ENCODE measurements at regions of chr12 and their contacts with region 1.

Region 1: GRCh38 chr12:55738123-55739024 is 4.5 kb upstream of the GDF11 start:
- DNase-seq: peak; percentile 77
- ATAC-seq: peak; percentile 93
- H3K4me3 ChIP-seq: peak overlapping the region; percentile 78
- H3K27ac ChIP-seq: peak overlapping the region; percentile 45
- H3K4me1 ChIP-seq: peaks cover 7% of the 10 kb centered on the region
- H3K27me3 ChIP-seq: no peaks in the 10 kb centered on the region
- CTCF ChIP-seq: peak; percentile 68 to 89 (median 87); a peak in 5 of 6 replicates
- EP300 ChIP-seq: no peak
- POLR2A ChIP-seq: no peak
- RAD21 ChIP-seq: peak; percentile 96

Region 2: DNA sequence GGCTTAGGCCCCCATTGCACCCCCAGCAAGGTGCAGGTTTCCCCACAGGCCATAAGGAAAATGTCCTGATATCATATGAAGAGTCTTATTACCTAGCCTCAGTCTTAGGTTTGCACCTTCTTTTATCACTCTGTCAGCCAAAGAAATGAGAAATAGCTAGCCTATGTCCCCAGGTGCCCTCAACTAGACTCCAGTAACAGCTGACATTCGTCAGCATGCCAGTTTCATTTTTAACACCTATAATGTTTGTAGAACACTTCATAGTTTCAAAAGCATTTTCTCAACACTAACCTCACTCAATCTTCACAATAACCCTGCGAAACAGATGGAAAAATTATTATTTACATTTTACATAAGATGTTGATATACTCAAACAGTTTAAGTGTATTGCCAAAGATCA is 125.7 kb before region 1 on chr12:
- CTCF ChIA-PET with region 1: no interaction called
- POLR2A ChIA-PET with region 1: no interaction called
- RAD21 ChIA-PET with region 1: no interaction called
- SMC1A ChIA-PET with region 1: no interaction called
- in situ Hi-C with region 1: no loop called
- intact Hi-C with region 1: no loop called
- DNase-seq: no peak
- ATAC-seq: peak; percentile 18; the same call in 1 of the 3 replicates
- H3K4me3 ChIP-seq: no peak overlapping the region
- H3K27ac ChIP-seq: no peak overlapping the region
- H3K4me1 ChIP-seq: no peaks in the 10 kb centered on the region
- H3K27me3 ChIP-seq: peaks cover 0 to 2% of the 10 kb centered on the region in 2 experiments; a peak in 1 of 4 replicates
- CTCF ChIP-seq: no peak
- EP300 ChIP-seq: no peak
- POLR2A ChIP-seq: no peak
- RAD21 ChIP-seq: no peak

Region 3: DNA sequence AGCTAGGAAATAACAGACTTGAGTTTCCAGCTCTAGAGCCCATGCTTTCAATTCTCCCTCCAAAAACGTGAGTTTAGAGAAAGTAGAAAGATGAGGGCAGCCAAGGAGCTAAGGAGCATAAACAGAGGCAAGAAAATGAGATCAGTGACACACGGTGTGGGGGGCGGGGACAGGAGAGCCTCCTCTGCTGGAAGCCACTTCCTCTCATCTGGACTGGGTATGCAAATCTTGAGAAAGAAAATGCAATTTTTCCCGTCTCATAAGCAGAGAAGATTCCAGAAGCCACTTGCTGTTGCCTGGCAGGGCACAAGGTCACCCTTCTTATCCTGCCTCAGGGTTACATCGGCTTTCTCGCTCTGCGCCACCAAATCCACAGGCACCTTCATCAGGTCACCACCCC is 95.7 kb before region 1 on chr12:
- CTCF ChIA-PET with region 1: interaction called, 25 read pairs
- POLR2A ChIA-PET with region 1: interaction called, 3 read pairs
- RAD21 ChIA-PET with region 1: interaction called, 3 read pairs
- SMC1A ChIA-PET with region 1: interaction called, 17 read pairs
- in situ Hi-C with region 1: no loop called
- intact Hi-C with region 1: no loop called
- DNase-seq: no peak
- ATAC-seq: no peak
- H3K4me3 ChIP-seq: no peak overlapping the region
- H3K27ac ChIP-seq: no peak overlapping the region
- H3K4me1 ChIP-seq: peaks cover 20% of the 10 kb centered on the region
- H3K27me3 ChIP-seq: no peaks in the 10 kb centered on the region
- CTCF ChIP-seq: no peak
- EP300 ChIP-seq: no peak
- POLR2A ChIP-seq: no peak
- RAD21 ChIP-seq: no peak

Region 4: DNA sequence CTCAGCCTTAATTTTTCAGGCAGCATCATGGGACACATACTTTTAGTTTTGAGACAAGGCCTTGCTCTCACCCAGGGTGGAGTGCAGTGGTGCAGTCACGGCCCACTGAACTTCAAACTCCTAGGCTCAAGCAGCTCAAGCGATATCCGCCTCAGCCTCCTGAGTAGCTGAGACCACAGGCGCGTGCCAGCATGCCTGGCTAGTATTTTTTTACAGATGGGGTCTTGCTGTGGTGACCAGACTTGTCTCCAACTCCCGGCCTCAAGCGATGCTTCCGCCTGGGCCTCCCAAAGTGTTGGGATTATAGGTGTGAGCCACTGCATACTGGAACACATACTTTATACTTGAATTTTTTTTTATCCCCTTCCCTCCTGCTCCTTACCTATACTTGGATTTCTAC is 15.4 kb before region 1 on chr12:
- CTCF ChIA-PET with region 1: interaction called, 205 read pairs
- POLR2A ChIA-PET with region 1: interaction called, 9 read pairs
- RAD21 ChIA-PET with region 1: interaction called, 113 read pairs
- SMC1A ChIA-PET with region 1: interaction called, 44 read pairs
- in situ Hi-C with region 1: no loop called
- intact Hi-C with region 1: no loop called
- DNase-seq: no peak
- ATAC-seq: peak; percentile 21; the same call in 1 of the 3 replicates
- H3K4me3 ChIP-seq: no peak overlapping the region
- H3K27ac ChIP-seq: no peak overlapping the region
- H3K4me1 ChIP-seq: peaks cover 21% of the 10 kb centered on the region
- H3K27me3 ChIP-seq: no peaks in the 10 kb centered on the region
- CTCF ChIP-seq: no peak
- EP300 ChIP-seq: no peak
- POLR2A ChIP-seq: no peak
- RAD21 ChIP-seq: no peak

Region 5: DNA sequence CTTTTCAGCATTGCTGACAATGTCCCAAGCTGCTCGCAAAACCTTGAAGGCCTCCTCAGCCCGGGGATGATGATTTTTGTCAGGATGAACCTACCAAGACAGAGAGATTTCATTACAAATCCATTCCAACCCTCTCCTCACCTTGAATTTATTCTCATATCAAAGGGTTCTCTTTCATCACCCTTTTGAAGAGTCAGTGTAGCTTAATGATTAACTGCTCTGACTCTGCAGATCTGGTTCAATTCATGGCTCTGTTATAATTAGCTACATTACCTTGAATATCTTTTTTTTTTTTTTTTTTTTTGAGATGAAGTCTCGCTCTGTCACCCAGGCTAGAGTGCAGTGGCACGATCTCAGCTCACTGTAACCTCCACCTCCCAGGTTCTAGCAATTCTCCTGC is 85.0 kb after region 1 on chr12:
- CTCF ChIA-PET with region 1: interaction called, 26 read pairs
- POLR2A ChIA-PET with region 1: interaction called, 38 read pairs
- RAD21 ChIA-PET with region 1: interaction called, 36 read pairs
- SMC1A ChIA-PET with region 1: interaction called, 22 read pairs
- in situ Hi-C with region 1: no loop called
- intact Hi-C with region 1: loop called (anchors 2 kb)
- DNase-seq: no peak
- ATAC-seq: no peak
- H3K4me3 ChIP-seq: no peak overlapping the region
- H3K27ac ChIP-seq: no peak overlapping the region
- H3K4me1 ChIP-seq: peaks cover 19% of the 10 kb centered on the region; the same call in 1 of the 2 replicates
- H3K27me3 ChIP-seq: no peaks in the 10 kb centered on the region
- CTCF ChIP-seq: no peak
- EP300 ChIP-seq: no peak
- POLR2A ChIP-seq: no peak
- RAD21 ChIP-seq: no peak

Region 6: GRCh38 chr12:55946553-55946952 is 208.2 kb after region 1 on chr12:
- CTCF ChIA-PET with region 1: interaction called, 31 read pairs
- POLR2A ChIA-PET with region 1: interaction called, 3 read pairs
- RAD21 ChIA-PET with region 1: interaction called, 43 read pairs
- SMC1A ChIA-PET with region 1: interaction called, 51 read pairs
- in situ Hi-C with region 1: loop called (anchors 5 kb)
- intact Hi-C with region 1: no loop called
- DNase-seq: no peak
- ATAC-seq: peak; percentile 97
- H3K4me3 ChIP-seq: 0 out of 2 replicates have a peak overlapping the region, but pooled peaks have one; percentile 24
- H3K27ac ChIP-seq: peak overlapping the region; percentile 61
- H3K4me1 ChIP-seq: peaks cover 15% of the 10 kb centered on the region
- H3K27me3 ChIP-seq: no peaks in the 10 kb centered on the region
- CTCF ChIP-seq: no peak
- EP300 ChIP-seq: no peak
- POLR2A ChIP-seq: no peak
- RAD21 ChIP-seq: no peak

Region 7: GRCh38 chr12:56029666-56030293 is 291.4 kb after region 1 on chr12:
- CTCF ChIA-PET with region 1: interaction called, 27 read pairs
- POLR2A ChIA-PET with region 1: no interaction called
- RAD21 ChIA-PET with region 1: interaction called, 15 read pairs
- SMC1A ChIA-PET with region 1: interaction called, 15 read pairs
- in situ Hi-C with region 1: loop called (anchors 5 kb)
- intact Hi-C with region 1: loop called (anchors 1 kb)
- DNase-seq: no peak
- ATAC-seq: peak; percentile 94
- H3K4me3 ChIP-seq: no peak overlapping the region
- H3K27ac ChIP-seq: no peak overlapping the region
- H3K4me1 ChIP-seq: no peaks in the 10 kb centered on the region
- H3K27me3 ChIP-seq: no peaks in the 10 kb centered on the region
- CTCF ChIP-seq: peak; percentile 69 to 72 (median 71)
- EP300 ChIP-seq: no peak
- POLR2A ChIP-seq: no peak
- RAD21 ChIP-seq: peak; percentile 64

Region 8: DNA sequence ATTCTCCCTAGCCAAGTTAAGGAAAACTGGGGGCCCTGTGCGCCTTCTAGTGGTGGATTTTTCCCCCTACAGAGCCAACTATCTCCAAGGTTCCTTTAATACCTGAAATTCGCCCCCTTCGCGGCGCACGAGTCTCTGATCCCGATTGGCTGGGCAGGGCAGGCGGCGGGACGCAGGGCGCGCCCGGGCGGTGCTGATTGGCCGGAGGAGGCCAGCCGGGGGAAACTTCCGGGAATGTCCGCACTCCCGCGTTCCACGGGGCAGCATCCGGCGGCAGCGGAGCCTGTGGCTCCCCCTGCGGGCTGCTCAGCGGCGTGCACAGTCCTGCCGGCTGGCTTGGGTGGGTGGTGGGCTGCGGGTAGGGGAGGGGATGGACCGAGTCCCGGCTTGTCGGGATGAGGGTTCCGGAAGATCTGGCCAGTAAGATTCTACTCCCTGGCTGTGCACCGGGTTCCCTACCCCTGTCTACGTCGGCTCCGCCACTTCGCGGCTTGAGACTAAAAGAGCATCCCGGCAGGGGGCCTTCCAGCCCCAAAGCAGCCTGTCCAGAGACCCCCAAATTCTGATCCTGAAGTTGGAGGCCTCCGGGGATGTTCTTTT is 485.8 kb after region 1 on chr12 and contains the start of gene NABP2:
- CTCF ChIA-PET with region 1: interaction called, 11 read pairs
- POLR2A ChIA-PET with region 1: interaction called, 3 read pairs
- RAD21 ChIA-PET with region 1: interaction called, 8 read pairs
- SMC1A ChIA-PET with region 1: no interaction called
- in situ Hi-C with region 1: no loop called
- intact Hi-C with region 1: no loop called
- DNase-seq: peak; percentile 89
- ATAC-seq: peak; percentile 90
- H3K4me3 ChIP-seq: peak within 1 kb of the TSS; percentile 97
- H3K27ac ChIP-seq: peak within 1 kb of the TSS; percentile 65
- H3K4me1 ChIP-seq: 0 out of 2 replicates have a peak, but pooled peaks cover 3% of the 10 kb centered on the region
- H3K27me3 ChIP-seq: no peaks in the 10 kb centered on the region
- CTCF ChIP-seq: peak; percentile 65 to 86 (median 85)
- EP300 ChIP-seq: 0 out of 4 replicates have a peak, but pooled peaks of 1 of the 2 experiments have one; percentile 7
- POLR2A ChIP-seq: peak; percentile 78
- RAD21 ChIP-seq: peak; percentile 49; the same call in 1 of the 2 replicates
- polyA plus RNA-seq, gene NABP2: 20.7 to 29.5 TPM